ENCODE measurements at regions of chr2 and their contacts with region 1.

Region 1: DNA sequence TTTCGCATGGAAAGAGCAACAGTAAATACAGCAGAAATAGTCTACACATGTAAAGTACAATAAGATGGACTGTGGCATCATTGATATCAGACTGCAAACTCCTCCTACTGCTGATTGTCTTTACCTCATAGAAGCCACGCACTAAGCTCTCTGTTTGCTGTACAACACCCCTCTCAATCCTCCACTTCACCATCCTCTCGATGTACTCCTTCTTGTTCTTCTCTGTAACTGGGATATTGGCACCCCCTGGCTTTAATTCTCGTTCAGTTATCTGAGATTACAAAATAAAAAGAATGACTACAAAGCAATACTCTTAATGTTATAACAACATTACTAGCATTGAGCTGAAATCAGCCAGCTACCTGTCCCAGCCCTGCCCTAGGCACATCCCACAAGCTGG is 49.3 kb upstream of the STK17B start:
- DNase-seq: peak; percentile 55
- H3K4me3 Mint-ChIP-seq: peak overlapping the region; percentile 13
- H3K27ac Mint-ChIP-seq: peak overlapping the region; percentile 0
- H3K4me1 Mint-ChIP-seq: peaks cover 81% of the 10 kb centered on the region
- H3K27me3 Mint-ChIP-seq: no peaks in the 10 kb centered on the region

Region 2: GRCh38 chr2:196131384-196131937 is 89.2 kb before region 1 on chr2:
- CTCF ChIA-PET with region 1: interaction called, 3 read pairs
- intact Hi-C with region 1: loop called (anchors 1 kb)
- DNase-seq: peak; percentile 70
- H3K4me3 Mint-ChIP-seq: no peak overlapping the region
- H3K27ac Mint-ChIP-seq: peak overlapping the region; percentile 70
- H3K4me1 Mint-ChIP-seq: peaks cover 12% of the 10 kb centered on the region
- H3K27me3 Mint-ChIP-seq: no peaks in the 10 kb centered on the region

Region 3: DNA sequence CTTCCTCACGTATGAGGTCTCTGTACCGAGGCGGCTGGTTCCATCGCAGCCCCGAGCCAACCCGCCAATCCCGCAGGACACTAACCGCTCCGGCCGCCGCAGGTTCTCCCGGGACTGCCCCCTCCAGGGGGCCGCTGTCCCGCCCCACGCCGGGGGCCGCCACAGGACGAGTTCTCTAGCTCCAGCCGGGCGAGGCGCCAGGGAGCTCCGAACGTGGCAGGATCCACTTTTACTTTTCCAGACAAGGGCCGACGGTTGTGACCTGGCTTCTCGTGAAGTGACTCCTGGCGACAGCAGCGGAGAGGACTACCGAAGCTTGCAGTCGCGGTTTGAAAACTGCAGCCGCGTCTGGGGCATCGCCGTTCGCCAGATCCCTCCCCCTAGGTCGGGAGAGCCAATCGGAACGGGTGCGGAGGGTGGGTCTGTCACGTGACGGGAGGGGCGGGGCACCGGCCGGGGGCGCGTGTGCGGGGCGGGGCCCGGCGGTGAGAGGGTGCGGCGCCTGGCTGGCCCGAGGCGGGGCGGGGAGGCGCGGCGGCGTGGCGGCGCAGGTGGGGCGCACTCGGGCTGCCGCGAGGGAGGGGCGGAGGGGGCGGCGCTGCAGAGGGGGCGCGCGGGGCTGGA is 49.3 kb before region 1 on chr2 and contains the start of gene STK17B:
- CTCF ChIA-PET with region 1: interaction called, 8 read pairs
- intact Hi-C with region 1: loop called (anchors 1 kb)
- DNase-seq: peak; percentile 98
- H3K4me3 Mint-ChIP-seq: peak within 1 kb of the TSS; percentile 93
- H3K27ac Mint-ChIP-seq: peak within 1 kb of the TSS; percentile 92
- H3K4me1 Mint-ChIP-seq: peaks cover 34% of the 10 kb centered on the region
- H3K27me3 Mint-ChIP-seq: no peaks in the 10 kb centered on the region
- total RNA-seq, gene STK17B: 141 to 143 TPM

Region 4: DNA sequence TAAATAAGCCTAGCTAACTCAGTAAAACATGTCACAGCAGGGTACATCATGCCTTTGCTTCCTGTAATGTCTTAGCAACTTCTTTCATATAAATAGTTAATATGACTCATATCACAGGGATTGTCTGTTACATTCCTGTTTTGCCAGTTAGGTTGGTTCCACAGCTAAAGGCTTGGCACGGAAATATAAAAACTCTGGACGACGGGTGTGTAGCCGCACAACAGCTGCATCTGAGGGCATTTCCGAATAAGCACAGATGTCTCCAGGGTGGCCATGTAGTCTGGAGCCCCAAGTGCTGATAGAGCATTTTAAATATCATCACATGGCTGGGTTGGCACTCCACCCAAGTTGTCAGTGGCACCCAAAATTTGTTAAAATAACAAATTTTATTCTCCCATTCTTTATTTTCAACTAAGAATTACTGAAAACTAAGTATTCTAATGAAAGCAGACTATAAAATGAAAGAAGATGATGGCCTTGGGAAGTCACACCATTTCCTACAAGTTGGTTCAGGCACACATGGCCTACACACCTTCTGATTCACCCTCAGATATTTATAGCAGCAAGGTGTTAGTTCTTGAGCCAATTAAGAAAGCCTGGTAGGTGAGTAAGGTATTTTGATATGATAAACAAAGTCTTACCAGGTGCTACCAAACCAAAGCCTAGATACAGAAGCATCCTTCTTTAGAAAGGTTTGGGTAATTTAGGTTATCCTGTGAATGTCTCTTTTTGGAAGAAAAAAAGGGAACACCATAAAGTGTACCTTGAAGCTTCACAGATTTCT is 12.5 kb after region 1 on chr2:
- CTCF ChIA-PET with region 1: interaction called, 10 read pairs
- intact Hi-C with region 1: no loop called
- DNase-seq: peak; percentile 34
- H3K4me3 Mint-ChIP-seq: no peak overlapping the region
- H3K27ac Mint-ChIP-seq: peak overlapping the region; percentile 91
- H3K4me1 Mint-ChIP-seq: peaks cover 92% of the 10 kb centered on the region
- H3K27me3 Mint-ChIP-seq: no peaks in the 10 kb centered on the region

Region 5: GRCh38 chr2:196337208-196337953 is 116.7 kb after region 1 on chr2:
- CTCF ChIA-PET with region 1: interaction called, 7 read pairs
- intact Hi-C with region 1: loop called (anchors 5 kb)
- DNase-seq: peak; percentile 37
- H3K4me3 Mint-ChIP-seq: no peak overlapping the region
- H3K27ac Mint-ChIP-seq: no peak overlapping the region
- H3K4me1 Mint-ChIP-seq: peaks cover 8% of the 10 kb centered on the region
- H3K27me3 Mint-ChIP-seq: no peaks in the 10 kb centered on the region

Region 6: GRCh38 chr2:196390243-196391148 is 169.8 kb after region 1 on chr2:
- CTCF ChIA-PET with region 1: no interaction called
- intact Hi-C with region 1: no loop called
- DNase-seq: no peak
- H3K4me3 Mint-ChIP-seq: no peak overlapping the region
- H3K27ac Mint-ChIP-seq: no peak overlapping the region
- H3K4me1 Mint-ChIP-seq: no peaks in the 10 kb centered on the region
- H3K27me3 Mint-ChIP-seq: no peaks in the 10 kb centered on the region

Region 7: GRCh38 chr2:196453613-196454047 is 233.0 kb after region 1 on chr2:
- CTCF ChIA-PET with region 1: interaction called, 3 read pairs
- intact Hi-C with region 1: loop called (anchors 5 kb)
- DNase-seq: peak; percentile 63
- H3K4me3 Mint-ChIP-seq: no peak overlapping the region
- H3K27ac Mint-ChIP-seq: no peak overlapping the region
- H3K4me1 Mint-ChIP-seq: peaks cover 2% of the 10 kb centered on the region
- H3K27me3 Mint-ChIP-seq: peaks cover 16% of the 10 kb centered on the region